ENCODE measurements at regions of chr22 and their contacts with region 1.

Region 1: DNA sequence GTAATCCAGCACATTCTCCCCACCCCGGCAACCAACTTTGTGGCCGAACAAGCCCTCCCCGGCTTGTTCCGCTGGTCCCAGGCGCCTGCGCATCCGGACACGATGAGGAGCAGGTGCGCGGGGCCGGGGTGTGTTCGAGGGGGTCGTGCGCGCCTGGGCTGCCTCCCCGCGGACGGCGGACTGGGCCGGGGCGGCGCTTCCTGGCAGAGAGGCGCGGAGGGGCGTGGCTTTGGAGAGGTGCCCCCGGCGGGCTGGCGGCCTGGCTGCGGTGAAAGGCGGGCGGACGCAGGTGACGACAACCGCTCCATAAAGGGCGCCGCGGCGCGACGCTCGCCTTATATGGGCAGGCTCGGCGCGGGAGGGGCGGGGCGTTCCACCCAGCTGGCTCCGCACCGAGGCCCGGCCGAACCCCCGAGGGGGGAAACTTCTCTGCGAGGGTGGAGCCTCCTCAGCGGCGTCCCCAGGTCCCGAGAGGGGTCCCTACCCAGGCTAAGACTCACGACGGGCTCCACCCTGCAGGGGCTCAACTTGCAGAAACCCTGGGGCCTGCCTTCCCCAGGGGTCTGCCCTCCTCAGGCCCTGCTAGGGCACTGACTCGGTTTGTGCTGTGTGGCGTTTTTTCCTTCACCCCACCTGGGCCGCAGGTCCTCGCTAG is 26.4 kb downstream of the TXN2 start:
- DNase-seq: peak; percentile 93 to 98
- ATAC-seq: peak; percentile 76 to 85 (median 81)
- H3K4me3 ChIP-seq: peak overlapping the region; percentile 68
- H3K4me3 Mint-ChIP-seq: peak overlapping the region; percentile 80
- H3K27ac ChIP-seq: peak overlapping the region; percentile 92
- H3K27ac Mint-ChIP-seq: peak overlapping the region; percentile 97 to 99
- H3K4me1 ChIP-seq: peaks cover 58% of the 10 kb centered on the region
- H3K4me1 Mint-ChIP-seq: peaks cover 37% of the 10 kb centered on the region in 2 donors
- H3K27me3 ChIP-seq: no peaks in the 10 kb centered on the region
- H3K27me3 Mint-ChIP-seq: no peaks in the 10 kb centered on the region
- CTCF ChIP-seq: no peak

Region 2: DNA sequence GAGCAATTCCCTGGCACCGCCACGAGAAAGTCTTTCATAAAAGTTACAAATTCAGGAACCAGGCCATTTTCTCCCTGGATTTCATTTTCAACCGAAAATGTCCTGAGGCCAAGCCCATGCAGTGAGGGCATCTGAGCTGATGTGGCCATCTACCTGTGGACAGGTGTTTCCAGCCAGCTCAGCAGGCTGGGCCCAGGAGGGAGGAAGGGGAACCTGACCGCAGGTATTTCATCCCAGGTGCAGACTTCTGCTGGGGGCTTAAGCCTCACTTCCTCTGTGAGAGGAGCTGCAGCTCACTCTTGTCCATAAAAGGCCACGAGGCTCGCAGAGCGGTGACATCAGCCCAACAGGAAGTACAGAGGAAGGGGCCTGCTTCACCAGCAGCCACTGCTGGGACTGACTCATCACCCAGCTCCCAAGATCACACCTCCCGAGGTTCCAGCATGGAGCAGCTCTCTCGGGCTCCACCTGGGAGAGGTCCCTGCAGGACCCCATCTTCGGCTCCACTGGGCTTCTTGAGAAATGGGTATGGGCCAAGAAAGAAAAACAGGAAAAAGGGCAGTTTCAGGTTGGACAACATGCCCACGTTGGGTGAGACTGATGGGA is 123.6 kb before region 1 on chr22:
- intact Hi-C with region 1: loop called (anchors 1 kb)
- DNase-seq: peak; percentile 74 to 91
- ATAC-seq: peak; percentile 59 to 83 (median 73)
- H3K4me3 ChIP-seq: peak overlapping the region; percentile 2
- H3K4me3 Mint-ChIP-seq: peak overlapping the region; percentile 91
- H3K27ac ChIP-seq: peak overlapping the region; percentile 80
- H3K27ac Mint-ChIP-seq: peak overlapping the region; percentile 98 to 100
- H3K4me1 ChIP-seq: peaks cover 91% of the 10 kb centered on the region
- H3K4me1 Mint-ChIP-seq: peaks cover 94 to 95% of the 10 kb centered on the region in 2 donors
- H3K27me3 ChIP-seq: no peaks in the 10 kb centered on the region
- H3K27me3 Mint-ChIP-seq: no peaks in the 10 kb centered on the region
- CTCF ChIP-seq: no peak

Region 3: GRCh38 chr22:36365020-36365411 is 90.0 kb before region 1 on chr22:
- intact Hi-C with region 1: loop called (anchors 5 kb)
- DNase-seq: peak; percentile 80 to 97
- ATAC-seq: peak; percentile 90 to 98 (median 94)
- H3K4me3 ChIP-seq: no peak overlapping the region
- H3K4me3 Mint-ChIP-seq: peak overlapping the region; percentile 77
- H3K27ac ChIP-seq: peak overlapping the region; percentile 84
- H3K27ac Mint-ChIP-seq: peak overlapping the region; percentile 90 to 96
- H3K4me1 ChIP-seq: peaks cover 96% of the 10 kb centered on the region
- H3K4me1 Mint-ChIP-seq: peaks cover 89 to 92% of the 10 kb centered on the region in 2 donors
- H3K27me3 ChIP-seq: no peaks in the 10 kb centered on the region
- H3K27me3 Mint-ChIP-seq: no peaks in the 10 kb centered on the region
- CTCF ChIP-seq: no peak

Region 4: GRCh38 chr22:36409911-36410756 is 44.9 kb before region 1 on chr22:
- intact Hi-C with region 1: loop called (anchors 5 kb)
- DNase-seq: peak; percentile 67 to 82
- ATAC-seq: peak; percentile 74 to 80 (median 79)
- H3K4me3 ChIP-seq: peak overlapping the region; percentile 23
- H3K4me3 Mint-ChIP-seq: peak overlapping the region; percentile 85
- H3K27ac ChIP-seq: peak overlapping the region; percentile 55
- H3K27ac Mint-ChIP-seq: peak overlapping the region; percentile 86 to 91
- H3K4me1 ChIP-seq: peaks cover 53% of the 10 kb centered on the region
- H3K4me1 Mint-ChIP-seq: peaks cover 39 to 45% of the 10 kb centered on the region in 2 donors
- H3K27me3 ChIP-seq: no peaks in the 10 kb centered on the region
- H3K27me3 Mint-ChIP-seq: no peaks in the 10 kb centered on the region
- CTCF ChIP-seq: no peak

Region 5: GRCh38 chr22:36481393-36482168 is 26.5 kb after region 1 on chr22 and contains the start of gene TXN2:
- intact Hi-C with region 1: loop called (anchors 1 kb)
- DNase-seq: peak; percentile 97 to 99
- ATAC-seq: peak; percentile 82 to 92 (median 82)
- H3K4me3 ChIP-seq: peak within 1 kb of the TSS; percentile 59
- H3K4me3 Mint-ChIP-seq: peak within 1 kb of the TSS; percentile 94
- H3K27ac ChIP-seq: peak within 1 kb of the TSS; percentile 96
- H3K27ac Mint-ChIP-seq: peak within 1 kb of the TSS; percentile 94 to 99
- H3K4me1 ChIP-seq: peaks cover 18% of the 10 kb centered on the region
- H3K4me1 Mint-ChIP-seq: peaks cover 14 to 20% of the 10 kb centered on the region in 2 donors
- H3K27me3 ChIP-seq: no peaks in the 10 kb centered on the region
- H3K27me3 Mint-ChIP-seq: no peaks in the 10 kb centered on the region
- CTCF ChIP-seq: no peak
- total RNA-seq, gene TXN2: 35.5 to 45.4 (median 41.5) TPM

Measured in natural killer cell (primary cell).